ENCODE measurements at regions of chr6 and their contacts with region 1.

Region 1: DNA sequence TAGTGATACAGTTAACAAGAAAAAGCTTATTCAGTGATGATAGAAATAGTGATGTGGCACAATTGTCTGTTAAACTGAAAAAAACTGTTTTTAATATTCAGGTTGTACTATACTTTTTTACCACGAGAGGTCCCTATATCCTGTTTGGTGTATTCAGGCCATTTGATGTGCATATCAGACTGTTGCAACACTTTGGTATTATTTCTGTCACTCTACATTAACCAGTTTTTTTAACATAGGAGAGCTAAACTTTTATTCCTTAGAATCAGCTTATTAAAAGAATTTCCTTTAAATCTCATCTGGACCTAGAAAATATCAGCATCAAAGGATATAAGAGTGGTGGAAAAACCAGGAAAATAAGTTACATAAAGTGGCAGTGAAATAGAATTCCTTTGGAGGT is 36.8 kb downstream of the TSPYL4 start:
- DNase-seq: peak; percentile 24
- ATAC-seq: peak; percentile 62
- H3K4me3 ChIP-seq: no peak overlapping the region
- H3K27ac ChIP-seq: no peak overlapping the region
- H3K4me1 ChIP-seq: peaks cover 0 to 3% of the 10 kb centered on the region in 2 experiments; a peak in 1 of 4 replicates
- H3K27me3 ChIP-seq: no peaks in the 10 kb centered on the region
- CTCF ChIP-seq: peak; percentile 40 to 60 (median 41); a peak in 4 of 6 replicates
- POLR2A ChIP-seq: no peak
- RAD21 ChIP-seq: peak; percentile 39

Region 2: GRCh38 chr6:116229287-116229913 is 12.3 kb after region 1 on chr6:
- CTCF ChIA-PET with region 1: interaction called, 17 read pairs
- POLR2A ChIA-PET with region 1: no interaction called
- RAD21 ChIA-PET with region 1: no interaction called
- intact Hi-C with region 1: no loop called
- DNase-seq: peak; percentile 31
- ATAC-seq: peak; percentile 80
- H3K4me3 ChIP-seq: no peak overlapping the region
- H3K27ac ChIP-seq: no peak overlapping the region
- H3K4me1 ChIP-seq: no peaks in the 10 kb centered on the region
- H3K27me3 ChIP-seq: no peaks in the 10 kb centered on the region
- CTCF ChIP-seq: no peak
- POLR2A ChIP-seq: no peak
- RAD21 ChIP-seq: no peak

Region 3: GRCh38 chr6:116268589-116269293 is 51.7 kb after region 1 on chr6:
- CTCF ChIA-PET with region 1: interaction called, 15 read pairs
- POLR2A ChIA-PET with region 1: no interaction called
- RAD21 ChIA-PET with region 1: no interaction called
- intact Hi-C with region 1: no loop called
- DNase-seq: peak; percentile 68
- ATAC-seq: peak; percentile 95
- H3K4me3 ChIP-seq: no peak overlapping the region
- H3K27ac ChIP-seq: no peak overlapping the region
- H3K4me1 ChIP-seq: peaks cover 0 to 10% of the 10 kb centered on the region in 2 experiments; a peak in 2 of 4 replicates
- H3K27me3 ChIP-seq: no peaks in the 10 kb centered on the region
- CTCF ChIP-seq: peak; percentile 84 to 99 (median 96)
- POLR2A ChIP-seq: no peak
- RAD21 ChIP-seq: peak; percentile 88

Region 4: DNA sequence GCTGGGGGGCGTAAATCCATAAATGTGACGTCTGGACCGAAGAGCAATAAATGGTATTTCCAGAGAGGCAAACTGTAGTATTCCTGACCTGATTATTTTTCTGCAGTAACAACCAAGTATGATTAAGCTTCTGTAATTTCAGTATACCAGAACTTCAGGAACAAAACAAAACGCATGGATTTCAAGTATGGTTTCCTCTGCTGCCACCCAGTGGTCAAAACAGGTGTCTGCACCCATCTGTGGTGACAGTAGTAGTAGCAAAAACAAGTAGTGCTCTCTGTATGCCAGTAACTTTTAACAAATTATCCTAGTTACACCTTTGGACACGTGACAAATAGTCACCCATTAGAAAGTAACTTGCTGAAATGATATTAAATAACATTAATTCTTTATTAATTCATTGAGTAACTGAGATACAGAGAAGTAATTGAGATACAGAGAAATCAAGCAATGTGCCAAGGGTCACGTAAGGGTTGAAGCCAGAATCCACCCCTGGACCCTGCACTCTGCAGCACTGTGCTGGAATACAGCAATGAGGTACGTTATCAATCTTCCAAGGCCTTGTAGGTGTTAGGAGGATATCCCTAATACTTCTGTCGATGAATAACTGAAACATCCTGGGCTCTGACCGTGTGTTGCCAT is 344.4 kb after region 1 on chr6:
- CTCF ChIA-PET with region 1: interaction called, 9 read pairs
- POLR2A ChIA-PET with region 1: no interaction called
- RAD21 ChIA-PET with region 1: no interaction called
- intact Hi-C with region 1: loop called (anchors 2 kb)
- DNase-seq: peak; percentile 55
- ATAC-seq: peak; percentile 80
- H3K4me3 ChIP-seq: no peak overlapping the region
- H3K27ac ChIP-seq: no peak overlapping the region
- H3K4me1 ChIP-seq: peaks cover 3 to 20% of the 10 kb centered on the region in 2 experiments; a peak in 3 of 4 replicates
- H3K27me3 ChIP-seq: no peaks in the 10 kb centered on the region
- CTCF ChIP-seq: peak; percentile 90 to 95 (median 91)
- POLR2A ChIP-seq: no peak
- RAD21 ChIP-seq: peak; percentile 87

Region 5: DNA sequence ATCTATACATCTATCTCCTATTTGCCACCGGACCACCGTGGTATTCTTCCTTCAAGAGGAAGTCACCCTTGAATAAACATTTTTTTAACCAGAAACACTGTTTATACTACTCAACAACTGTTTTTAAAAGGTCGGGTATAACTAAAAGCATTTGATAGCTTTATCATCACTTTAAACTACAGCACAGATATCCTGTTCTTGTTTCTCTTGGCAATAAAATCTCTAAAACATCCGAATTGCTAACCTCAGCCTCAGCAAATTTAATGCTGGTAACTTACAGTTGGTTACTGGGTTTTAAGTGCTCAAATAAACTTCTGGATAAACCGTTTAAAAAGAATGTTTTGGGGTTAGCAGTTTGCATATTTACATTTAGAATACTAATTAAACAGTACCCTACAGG is 431.1 kb after region 1 on chr6:
- CTCF ChIA-PET with region 1: interaction called, 3 read pairs
- POLR2A ChIA-PET with region 1: no interaction called
- RAD21 ChIA-PET with region 1: no interaction called
- intact Hi-C with region 1: loop called (anchors 5 kb)
- DNase-seq: no peak
- ATAC-seq: no peak
- H3K4me3 ChIP-seq: no peak overlapping the region
- H3K27ac ChIP-seq: no peak overlapping the region
- H3K4me1 ChIP-seq: no peaks in the 10 kb centered on the region
- H3K27me3 ChIP-seq: no peaks in the 10 kb centered on the region
- CTCF ChIP-seq: no peak
- POLR2A ChIP-seq: no peak
- RAD21 ChIP-seq: no peak

Region 6: DNA sequence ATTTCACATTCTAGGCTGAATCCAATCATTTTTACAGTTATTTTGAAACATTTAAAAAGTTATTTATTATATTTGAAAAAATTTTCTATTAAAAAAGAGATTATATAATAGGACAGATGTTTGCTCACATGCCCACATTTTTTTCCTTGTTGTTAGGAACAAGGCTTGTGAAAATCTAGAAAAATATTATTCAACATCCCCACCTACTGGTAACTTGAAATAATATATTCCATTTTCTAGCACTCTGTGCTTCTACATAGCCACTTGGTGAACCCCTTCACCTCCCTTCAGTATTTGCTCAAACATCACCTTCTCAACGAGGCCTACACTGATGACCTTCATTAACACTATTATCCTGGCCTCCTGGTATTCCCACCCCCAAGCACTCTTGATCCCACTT is 630.2 kb after region 1 on chr6:
- CTCF ChIA-PET with region 1: no interaction called
- POLR2A ChIA-PET with region 1: no interaction called
- RAD21 ChIA-PET with region 1: no interaction called
- intact Hi-C with region 1: loop called (anchors 5 kb)
- DNase-seq: peak; percentile 35
- ATAC-seq: peak; percentile 80
- H3K4me3 ChIP-seq: no peak overlapping the region
- H3K27ac ChIP-seq: no peak overlapping the region
- H3K4me1 ChIP-seq: no peaks in the 10 kb centered on the region
- H3K27me3 ChIP-seq: no peaks in the 10 kb centered on the region
- CTCF ChIP-seq: peak; percentile 12 to 51 (median 30); a peak in 4 of 6 replicates
- POLR2A ChIP-seq: no peak
- RAD21 ChIP-seq: peak; percentile 60

Region 7: DNA sequence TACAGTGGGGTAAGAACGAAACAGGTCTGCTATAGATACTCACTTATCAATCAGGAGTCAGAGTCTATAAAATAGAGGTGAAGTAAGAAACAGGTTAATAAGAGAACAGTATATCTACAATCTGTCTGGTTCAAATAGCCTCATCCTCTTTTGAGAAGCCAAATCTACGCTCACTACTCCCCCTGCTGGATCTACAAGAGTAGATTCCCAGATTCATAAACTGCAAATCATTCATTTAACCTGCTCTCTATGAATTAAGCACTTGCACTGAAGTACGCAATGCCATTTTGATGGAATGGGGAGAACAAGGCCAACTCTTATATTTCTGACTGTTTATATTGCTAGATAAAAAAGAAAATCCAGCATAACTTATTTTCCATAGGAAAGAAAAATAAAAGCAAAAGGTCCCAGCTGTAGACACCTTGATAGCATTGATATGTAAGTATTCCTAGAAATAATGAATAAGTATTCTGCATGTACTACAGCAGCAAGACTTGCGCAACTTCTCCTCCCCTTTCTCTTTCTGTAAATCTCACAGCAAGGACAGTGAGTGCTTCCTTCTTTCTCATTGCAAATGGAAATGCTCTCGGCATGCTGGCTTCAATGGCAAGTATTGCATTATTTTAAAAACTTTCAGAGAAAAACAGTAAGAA is 752.3 kb after region 1 on chr6:
- CTCF ChIA-PET with region 1: no interaction called
- POLR2A ChIA-PET with region 1: no interaction called
- RAD21 ChIA-PET with region 1: no interaction called
- intact Hi-C with region 1: loop called (anchors 5 kb)
- DNase-seq: peak; percentile 57
- ATAC-seq: peak; percentile 84
- H3K4me3 ChIP-seq: no peak overlapping the region
- H3K27ac ChIP-seq: no peak overlapping the region
- H3K4me1 ChIP-seq: no peaks in the 10 kb centered on the region
- H3K27me3 ChIP-seq: no peaks in the 10 kb centered on the region
- CTCF ChIP-seq: peak; percentile 63 to 80 (median 73); a peak in 4 of 6 replicates
- POLR2A ChIP-seq: no peak
- RAD21 ChIP-seq: peak; percentile 69

Measured in HCT116 (cell line).